Adrenal gland (tissue), 19 donors: ENCODE measurements at regions of chr9 and their contacts with region 1.

Region 1: DNA sequence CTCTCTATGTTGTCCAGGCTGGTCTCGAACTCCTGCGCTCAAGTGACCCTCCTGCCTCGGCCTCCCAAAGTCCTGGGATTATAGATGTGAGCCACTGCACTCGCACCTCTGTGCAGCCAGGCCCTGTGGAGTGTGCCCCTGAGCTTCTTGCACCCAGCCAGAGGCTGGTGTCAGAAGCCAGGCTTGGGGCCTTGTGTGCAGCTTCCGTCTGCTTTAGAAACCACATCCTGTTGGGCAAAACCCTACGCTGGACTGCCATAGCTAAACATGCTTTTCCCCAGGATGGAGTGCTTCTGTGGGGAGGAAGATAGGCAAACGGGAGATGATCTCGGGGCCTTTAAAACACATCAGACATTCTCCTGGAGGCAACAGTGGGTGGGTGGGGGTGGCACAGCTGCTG is 40.1 kb downstream of the PRRT1B start:
- DNase-seq: peak in 2 of 7 donors; percentile 15 to 42
- H3K4me3 ChIP-seq: no peak overlapping the region
- H3K27ac ChIP-seq: peak overlapping the region in 1 of 5 donors; percentile 40
- H3K4me1 ChIP-seq: no peaks in the 10 kb centered on the region
- H3K27me3 ChIP-seq: no peaks in the 10 kb centered on the region
- CTCF ChIP-seq: no peak
- POLR2A ChIP-seq: no peak

Region 2: GRCh38 chr9:131366761-131367401 is 218.5 kb before region 1 on chr9:
- intact Hi-C with region 1: loop called in 1 of 2 experiments (anchors 10 kb)
- DNase-seq: peak in 2 of 7 donors; percentile 32 to 37
- H3K4me3 ChIP-seq: no peak overlapping the region
- H3K27ac ChIP-seq: peak overlapping the region in 1 of 5 donors; percentile 45
- H3K4me1 ChIP-seq: no peaks in the 10 kb centered on the region
- H3K27me3 ChIP-seq: no peaks in the 10 kb centered on the region
- CTCF ChIP-seq: peak in 2 of 6 experiments; percentile 15 to 20
- POLR2A ChIP-seq: no peak

Region 3: DNA sequence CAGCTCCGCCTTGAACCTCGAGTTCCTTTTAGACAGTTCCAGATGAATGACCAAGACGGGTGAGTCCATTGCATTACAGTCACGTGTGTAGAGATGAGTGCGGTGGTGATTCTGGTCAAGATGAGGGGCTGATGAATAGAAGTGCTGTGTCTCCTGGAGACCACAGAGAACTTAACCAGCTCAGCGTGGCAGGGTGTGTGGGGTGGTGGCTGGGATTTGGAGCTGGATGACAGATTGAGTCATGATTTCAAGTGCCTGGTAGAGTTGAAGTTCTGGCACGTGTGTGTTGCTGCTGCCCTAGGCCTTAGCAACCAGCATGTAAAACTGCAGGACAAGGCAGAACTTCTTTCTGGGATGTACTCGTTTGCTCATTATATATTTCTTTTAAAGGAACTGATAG is 138.2 kb before region 1 on chr9:
- intact Hi-C with region 1: no loop called
- DNase-seq: no peak
- H3K4me3 ChIP-seq: no peak overlapping the region
- H3K27ac ChIP-seq: no peak overlapping the region
- H3K4me1 ChIP-seq: peaks cover 0 to 6% of the 10 kb centered on the region in 2 donors
- H3K27me3 ChIP-seq: no peaks in the 10 kb centered on the region
- CTCF ChIP-seq: no peak
- POLR2A ChIP-seq: no peak

Region 4: GRCh38 chr9:131459056-131459455 is 126.3 kb before region 1 on chr9:
- intact Hi-C with region 1: no loop called
- DNase-seq: no peak
- H3K4me3 ChIP-seq: no peak overlapping the region
- H3K27ac ChIP-seq: no peak overlapping the region
- H3K4me1 ChIP-seq: no peaks in the 10 kb centered on the region
- H3K27me3 ChIP-seq: no peaks in the 10 kb centered on the region
- CTCF ChIP-seq: no peak
- POLR2A ChIP-seq: no peak

Region 5: GRCh38 chr9:132042324-132042723 is 456.9 kb after region 1 on chr9:
- intact Hi-C with region 1: no loop called
- DNase-seq: peak in 4 of 7 donors; percentile 16 to 25 (median 20)
- H3K4me3 ChIP-seq: no peak overlapping the region
- H3K27ac ChIP-seq: no peak overlapping the region
- H3K4me1 ChIP-seq: peaks cover 0 to 17% of the 10 kb centered on the region in 2 donors
- H3K27me3 ChIP-seq: no peaks in the 10 kb centered on the region
- CTCF ChIP-seq: peak in 1 of 6 experiments; percentile 19
- POLR2A ChIP-seq: no peak